ENCODE measurements at regions of chr3 and their contacts with region 1.

Region 1: GRCh38 chr3:112124907-112125607 is 8.0 kb downstream of the GCSAM start:
- DNase-seq: no peak
- H3K4me3 ChIP-seq: no peak overlapping the region
- H3K27me3 ChIP-seq: no peaks in the 10 kb centered on the region
- CTCF ChIP-seq: no peak

Region 2: GRCh38 chr3:112084980-112085705 is 39.9 kb before region 1 on chr3:
- CTCF ChIA-PET with region 1: no interaction called
- POLR2A ChIA-PET with region 1: no interaction called
- DNase-seq: no peak
- H3K4me3 ChIP-seq: no peak overlapping the region
- H3K27me3 ChIP-seq: no peaks in the 10 kb centered on the region
- CTCF ChIP-seq: no peak

Region 3: DNA sequence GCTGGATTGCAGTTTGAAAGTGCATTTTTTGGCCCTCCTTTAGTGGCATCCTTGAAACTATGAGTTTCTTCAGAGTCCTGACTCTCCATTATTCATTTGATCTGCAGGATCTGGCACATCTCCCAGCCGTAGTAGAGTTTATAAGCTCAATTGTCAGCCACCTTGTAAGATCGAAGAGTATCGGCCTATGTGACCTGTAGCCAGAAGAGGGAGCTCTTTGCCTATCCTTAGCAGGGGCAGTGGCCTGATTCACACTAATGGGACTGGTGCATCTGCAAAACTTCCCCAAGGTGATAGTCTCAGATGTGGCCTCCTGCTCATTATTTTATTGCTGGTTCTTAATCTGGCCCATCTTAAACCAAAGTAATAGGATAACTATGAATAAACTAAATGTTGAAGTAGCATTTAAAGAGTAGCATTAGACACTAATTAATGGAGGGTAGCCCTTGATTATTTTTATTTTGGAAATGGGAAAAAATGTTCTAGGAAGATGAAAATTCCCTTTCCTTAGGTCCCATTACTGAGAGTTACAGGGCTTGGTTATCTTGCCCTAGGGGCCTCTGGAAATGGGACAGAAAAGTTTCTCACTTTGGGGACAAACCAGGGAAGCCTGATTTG is 13.2 kb before region 1 on chr3:
- CTCF ChIA-PET with region 1: interaction called, 10 read pairs
- POLR2A ChIA-PET with region 1: no interaction called
- DNase-seq: no peak
- H3K4me3 ChIP-seq: no peak overlapping the region
- H3K27me3 ChIP-seq: no peaks in the 10 kb centered on the region
- CTCF ChIP-seq: peak; percentile 89

Region 4: DNA sequence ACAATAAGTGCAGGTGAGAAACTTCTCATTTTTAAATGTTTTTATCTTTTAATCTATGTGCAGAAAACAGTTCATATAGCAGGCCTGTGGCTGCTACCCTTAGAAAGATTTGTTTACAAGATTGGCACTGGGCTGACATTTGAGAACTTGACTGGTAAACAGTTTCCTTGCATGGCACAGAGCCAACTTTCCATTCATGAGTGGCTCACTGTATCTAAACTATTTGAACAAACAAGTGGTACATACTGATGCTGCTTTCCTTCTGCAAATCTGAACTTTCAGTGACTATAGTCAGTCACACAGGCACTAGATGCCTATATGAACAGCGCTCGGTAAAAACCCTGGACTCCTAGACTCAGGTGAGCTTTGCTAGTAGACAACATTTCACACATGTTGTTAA is 859.4 kb after region 1 on chr3:
- CTCF ChIA-PET with region 1: no interaction called
- POLR2A ChIA-PET with region 1: no interaction called
- DNase-seq: no peak
- H3K4me3 ChIP-seq: no peak overlapping the region
- H3K27me3 ChIP-seq: no peaks in the 10 kb centered on the region
- CTCF ChIP-seq: no peak

Measured in BJ (cell line).